Uterus (tissue), 4 donors: ENCODE measurements at regions of chr12 and their contacts with region 1.

Region 1: DNA sequence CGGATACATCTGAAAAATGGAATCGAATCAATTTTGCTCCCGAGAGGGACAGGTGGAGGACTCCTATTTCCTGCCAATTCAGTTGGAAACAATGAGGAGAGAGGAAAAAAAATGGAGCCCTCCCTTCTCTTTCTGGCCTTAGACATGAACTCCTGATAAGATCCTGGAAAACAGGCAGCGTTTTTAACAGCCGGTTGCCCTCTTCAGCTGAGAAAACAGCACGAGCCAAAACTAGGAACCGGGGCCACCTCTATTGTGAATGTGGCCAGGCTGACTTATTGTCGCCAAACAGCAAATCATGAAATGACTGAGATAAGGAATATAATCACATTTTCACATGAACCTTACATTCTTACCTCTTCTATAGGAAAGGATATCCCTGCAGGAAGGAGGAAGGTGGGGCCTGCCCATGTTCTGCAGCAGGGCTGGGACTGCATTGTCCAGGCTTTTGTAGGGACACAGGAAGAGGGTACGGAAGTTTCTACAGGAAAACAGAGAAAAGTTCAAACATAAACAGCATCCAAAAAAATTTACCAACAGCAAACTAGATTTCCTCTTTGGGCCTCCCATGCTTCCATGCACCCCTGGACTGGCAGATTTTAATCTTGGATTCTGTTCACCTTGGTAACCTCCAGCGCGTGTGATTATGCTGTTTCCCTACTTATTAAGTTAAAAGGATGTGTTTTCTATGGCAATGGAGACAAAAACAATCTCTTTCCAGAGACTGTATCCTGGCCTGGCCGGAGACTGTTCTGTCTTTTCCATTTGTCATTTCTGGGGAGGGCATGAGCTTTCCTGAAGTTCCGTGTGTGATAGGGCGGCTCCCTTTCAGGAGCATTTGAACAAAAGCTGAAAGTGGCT is 29.0 kb upstream of the ELK3 start:
- DNase-seq: peak in 1 of 2 donors; percentile 47
- H3K4me3 ChIP-seq: no peak overlapping the region
- H3K27ac ChIP-seq: peak overlapping the region; percentile 59 to 64
- H3K4me1 ChIP-seq: no peaks in the 10 kb centered on the region
- H3K27me3 ChIP-seq: no peaks in the 10 kb centered on the region
- CTCF ChIP-seq: no peak
- POLR2A ChIP-seq: peak in 1 of 2 donors; percentile 13

Region 2: GRCh38 chr12:96070670-96071279 is 94.4 kb before region 1 on chr12:
- intact Hi-C with region 1: loop called (anchors 10 kb)
- DNase-seq: no peak
- H3K4me3 ChIP-seq: no peak overlapping the region
- H3K27ac ChIP-seq: no peak overlapping the region
- H3K4me1 ChIP-seq: no peaks in the 10 kb centered on the region
- H3K27me3 ChIP-seq: no peaks in the 10 kb centered on the region
- CTCF ChIP-seq: no peak
- POLR2A ChIP-seq: no peak